ENCODE measurements at regions of chr2 and their contacts with region 1.

Region 1: DNA sequence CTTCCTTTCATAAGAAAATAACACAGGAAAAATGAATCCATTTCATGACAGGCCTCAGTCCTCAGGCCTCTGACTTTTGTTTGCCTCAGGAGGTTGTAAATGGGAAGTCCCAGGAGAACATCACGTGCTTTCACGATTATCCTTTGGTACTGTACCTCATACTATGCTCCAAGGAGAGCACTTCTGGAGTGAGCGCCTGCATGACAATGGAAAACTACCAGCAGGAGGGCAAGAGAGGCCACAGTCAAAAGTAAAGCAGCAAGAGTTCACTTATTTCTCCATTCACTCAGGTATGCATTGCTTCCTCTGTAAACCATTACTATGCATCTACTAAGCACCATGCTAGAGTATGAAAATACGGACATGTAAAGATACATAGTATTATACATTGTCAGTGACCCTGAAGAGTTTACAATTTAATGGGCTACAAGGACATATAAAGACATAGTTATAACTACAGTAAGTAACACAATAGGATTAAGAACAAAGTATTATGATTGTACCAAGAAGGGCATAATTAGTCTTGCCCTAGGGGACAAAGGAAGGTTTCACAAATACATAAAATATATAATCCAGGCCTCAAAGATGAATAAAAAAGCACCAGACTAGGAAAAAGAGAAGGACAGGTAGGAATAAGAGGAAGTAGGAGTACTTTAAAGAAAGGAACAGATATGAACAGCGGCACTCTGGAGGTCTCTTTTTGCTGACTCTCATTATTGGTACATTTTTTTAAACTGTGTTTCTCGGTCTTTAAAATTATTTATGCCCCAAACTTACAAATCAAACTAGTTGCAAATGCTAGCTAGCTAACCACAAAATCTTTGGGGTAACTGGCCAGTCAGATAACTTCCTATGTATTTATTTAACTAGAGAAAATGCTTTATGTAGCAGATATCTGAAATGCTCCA is 806.7 kb downstream of the NRXN1 start:
- DNase-seq: no peak
- H3K4me3 ChIP-seq: no peak overlapping the region
- H3K27ac ChIP-seq: no peak overlapping the region
- H3K4me1 ChIP-seq: no peaks in the 10 kb centered on the region
- H3K27me3 ChIP-seq: 0 out of 2 replicates have a peak, but pooled peaks cover 3% of the 10 kb centered on the region
- CTCF ChIP-seq: no peak

Region 2: DNA sequence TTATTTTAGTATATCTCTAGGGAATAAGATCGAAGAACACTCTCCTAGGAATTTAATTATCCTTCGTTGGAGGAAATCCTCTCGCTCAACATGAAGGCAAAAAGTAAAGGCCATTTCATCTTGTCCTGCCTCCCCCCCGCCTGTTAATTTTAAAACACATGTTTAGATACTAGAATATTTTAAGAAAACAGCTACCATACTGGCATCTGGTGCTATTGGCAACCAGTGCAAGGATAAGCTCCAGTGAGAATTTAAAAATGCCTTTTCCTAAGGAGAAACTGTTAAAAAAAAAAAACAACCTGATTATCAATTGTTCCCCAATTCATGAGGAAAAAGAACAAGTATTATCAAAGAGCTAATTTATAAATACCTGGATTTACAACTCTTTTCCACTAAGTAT is 58.0 kb before region 1 on chr2:
- CTCF ChIA-PET with region 1: no interaction called
- POLR2A ChIA-PET with region 1: interaction called, 15 read pairs
- intact Hi-C with region 1: no loop called
- DNase-seq: no peak
- H3K4me3 ChIP-seq: no peak overlapping the region
- H3K27ac ChIP-seq: no peak overlapping the region
- H3K4me1 ChIP-seq: no peaks in the 10 kb centered on the region
- H3K27me3 ChIP-seq: no peaks in the 10 kb centered on the region
- CTCF ChIP-seq: no peak

Measured in PC-9 (cell line).